Heart right ventricle (tissue), 16 donors: ENCODE measurements at regions of chr7 and their contacts with region 1.

Region 1: DNA sequence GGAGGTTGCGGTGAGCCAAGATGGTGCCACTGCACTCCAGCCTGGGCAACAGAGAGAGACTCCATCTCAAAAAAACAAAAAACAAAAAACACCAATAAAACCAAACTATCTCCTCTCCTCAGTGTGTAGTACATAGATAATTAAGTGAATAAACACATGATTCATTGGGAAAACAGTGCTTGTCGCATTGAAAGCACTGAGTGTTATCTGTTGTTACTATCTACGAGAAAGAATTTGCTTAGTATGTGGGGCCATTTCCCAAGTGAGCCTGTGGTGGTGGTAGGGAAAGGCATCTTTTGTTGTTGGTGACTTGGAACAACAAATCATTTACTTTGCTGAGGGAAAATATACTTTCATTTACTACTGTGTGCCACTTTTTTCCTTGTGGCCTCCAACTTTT is 42.6 kb downstream of the RSBN1L start:
- DNase-seq: no peak
- ATAC-seq: no peak
- H3K4me3 ChIP-seq: no peak overlapping the region
- H3K27ac ChIP-seq: no peak overlapping the region
- H3K4me1 ChIP-seq: peaks cover 0 to 25% (median 13%) of the 10 kb centered on the region in 9 donors
- H3K27me3 ChIP-seq: no peaks in the 10 kb centered on the region
- CTCF ChIP-seq: no peak

Region 2: DNA sequence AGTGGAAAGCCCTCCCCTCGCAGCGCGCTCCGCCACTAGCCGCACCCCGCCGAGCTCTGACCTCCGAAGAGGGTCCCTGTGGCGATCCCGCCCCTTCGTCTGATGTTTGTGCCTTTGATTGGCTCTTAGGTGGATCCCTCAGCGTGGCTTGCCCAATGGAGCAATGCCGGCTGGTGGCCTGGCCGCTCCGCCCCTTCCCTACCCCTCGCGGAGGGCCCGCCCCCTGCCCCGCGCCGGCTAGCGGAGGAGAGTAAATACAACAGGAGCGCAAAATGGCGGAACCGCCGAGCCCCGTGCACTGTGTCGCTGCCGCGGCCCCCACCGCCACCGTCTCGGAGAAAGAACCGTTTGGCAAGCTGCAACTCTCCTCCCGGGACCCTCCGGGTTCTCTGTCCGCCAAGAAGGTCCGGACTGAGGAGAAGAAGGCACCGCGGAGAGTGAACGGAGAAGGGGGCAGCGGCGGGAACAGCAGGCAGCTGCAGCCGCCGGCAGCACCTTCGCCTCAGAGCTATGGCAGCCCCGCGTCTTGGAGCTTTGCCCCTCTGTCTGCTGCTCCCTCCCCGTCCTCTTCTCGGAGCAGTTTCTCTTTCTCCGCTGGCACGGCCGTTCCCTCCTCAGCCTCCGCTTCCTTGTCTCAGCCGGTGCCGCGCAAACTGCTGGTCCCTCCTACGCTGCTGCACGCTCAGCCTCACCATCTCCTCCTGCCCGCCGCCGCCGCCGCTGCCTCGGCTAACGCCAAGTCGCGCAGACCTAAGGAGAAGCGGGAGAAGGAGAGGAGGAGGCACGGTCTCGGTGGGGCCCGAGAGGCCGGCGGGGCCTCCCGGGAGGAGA is 42.5 kb before region 1 on chr7 and contains the start of gene RSBN1L:
- intact Hi-C with region 1: loop called in 1 of 10 experiments (anchors 5 kb)
- DNase-seq: peak; percentile 98 to 99
- ATAC-seq: peak; percentile 98 to 100 (median 99)
- H3K4me3 ChIP-seq: peak within 1 kb of the TSS; percentile 77 to 100 (median 97)
- H3K27ac ChIP-seq: peak within 1 kb of the TSS; percentile 90 to 99 (median 96)
- H3K4me1 ChIP-seq: peaks cover 0 to 64% (median 53%) of the 10 kb centered on the region in 9 donors
- H3K27me3 ChIP-seq: no peaks in the 10 kb centered on the region
- CTCF ChIP-seq: peak; percentile 12 to 64 (median 43)
- total RNA-seq, gene RSBN1L: 7.7 to 11.8 (median 10.0) TPM

Region 3: DNA sequence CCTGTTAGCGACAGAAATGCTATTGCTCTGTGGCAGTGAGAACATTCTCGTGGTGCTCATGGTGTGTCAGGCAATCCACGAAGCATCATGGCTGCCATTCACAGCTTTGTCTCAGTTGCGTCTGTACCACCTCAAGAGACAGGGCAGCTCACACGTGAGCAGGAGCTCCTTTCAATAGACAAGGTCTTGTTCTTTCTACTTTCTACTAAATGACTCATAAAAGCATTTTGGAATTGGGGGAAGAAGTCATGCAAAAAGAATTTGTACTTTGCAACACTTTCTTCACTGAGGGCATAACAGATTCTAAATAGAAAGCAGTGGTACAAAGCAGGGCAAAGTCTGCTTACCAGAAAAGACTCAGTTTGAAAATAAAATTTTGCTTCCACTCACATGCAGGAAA is 698.2 kb after region 1 on chr7:
- intact Hi-C with region 1: no loop called
- DNase-seq: no peak
- ATAC-seq: no peak
- H3K4me3 ChIP-seq: no peak overlapping the region
- H3K27ac ChIP-seq: no peak overlapping the region
- H3K4me1 ChIP-seq: no peaks in the 10 kb centered on the region
- H3K27me3 ChIP-seq: no peaks in the 10 kb centered on the region
- CTCF ChIP-seq: no peak